Activated naive CD4-positive, alpha-beta T cell treated with anti-CD3 and anti-CD28 coated beads, Interleukin-2, amount 10 ng/mL, durations not matched to agents 7 days and 5 days (primary cell): ENCODE measurements at regions of chr1 and their contacts with region 1.

Region 1: GRCh38 chr1:89358287-89358893 is 5.5 kb upstream of the GBP6 start:
- DNase-seq: peak; percentile 90
- H3K4me3 Mint-ChIP-seq: peak overlapping the region; percentile 2
- H3K27ac Mint-ChIP-seq: peak overlapping the region; percentile 58
- H3K4me1 Mint-ChIP-seq: peaks cover 53% of the 10 kb centered on the region
- H3K27me3 Mint-ChIP-seq: no peaks in the 10 kb centered on the region

Region 2: DNA sequence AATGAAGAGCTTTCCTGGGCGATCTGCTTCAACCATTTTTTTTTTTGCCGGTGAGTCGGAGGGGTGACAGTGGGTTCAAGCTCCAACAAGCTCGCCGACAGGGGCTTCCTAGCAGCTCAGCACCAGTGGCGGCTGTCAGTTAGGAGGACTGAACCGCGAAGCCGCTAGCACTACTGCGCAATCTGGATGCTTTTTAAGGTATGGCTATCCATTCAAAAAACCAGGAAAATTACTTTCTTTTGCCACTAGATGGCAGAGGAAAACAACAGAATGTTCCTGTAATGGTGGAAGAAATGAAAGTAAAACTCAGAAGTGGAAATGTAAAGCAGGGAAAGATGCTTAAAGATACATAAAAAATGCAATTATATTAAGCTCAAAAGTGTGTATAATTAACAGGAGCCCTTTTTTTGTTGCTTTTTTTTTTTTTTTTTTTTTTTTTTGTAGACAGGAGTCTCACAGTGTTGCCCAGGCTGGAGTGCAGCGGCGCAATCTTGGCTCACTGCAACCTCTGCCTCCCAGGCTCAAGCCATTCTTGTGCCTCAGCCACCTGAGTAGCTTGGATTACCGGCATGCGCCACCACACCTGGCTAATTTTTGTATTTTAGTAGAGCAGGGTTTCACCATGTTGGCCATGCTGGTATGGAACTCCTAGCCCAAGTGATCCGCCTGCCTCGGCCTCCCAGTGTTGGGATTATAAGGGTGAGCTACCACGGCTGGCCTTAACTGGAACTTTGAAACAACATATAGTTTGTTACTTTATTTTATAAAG is 374.4 kb before region 1 on chr1:
- CTCF ChIA-PET with region 1: interaction called, 19 read pairs
- DNase-seq: peak; percentile 49
- H3K4me3 Mint-ChIP-seq: peak overlapping the region; percentile 15
- H3K27ac Mint-ChIP-seq: peak overlapping the region; percentile 44
- H3K4me1 Mint-ChIP-seq: peaks cover 75% of the 10 kb centered on the region
- H3K27me3 Mint-ChIP-seq: no peaks in the 10 kb centered on the region

Region 3: DNA sequence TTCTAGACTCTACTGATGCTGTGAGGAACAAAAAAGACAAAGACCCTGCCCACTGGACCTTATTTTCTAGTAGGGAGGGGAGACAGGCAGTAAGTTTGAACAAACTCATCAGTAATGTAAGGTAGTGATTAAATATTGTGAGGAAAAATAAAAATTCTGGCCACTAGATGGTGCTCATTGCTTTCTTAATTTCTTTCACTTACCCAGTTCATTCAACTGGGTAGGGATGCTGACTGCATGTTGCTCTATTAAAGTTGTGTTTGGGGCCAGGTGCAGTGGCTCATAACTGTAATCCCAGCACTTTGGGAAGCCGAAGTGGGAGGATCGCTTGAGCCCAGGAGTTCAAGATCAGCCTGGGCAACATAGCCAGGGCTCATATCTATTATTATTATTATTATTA is 359.7 kb before region 1 on chr1:
- CTCF ChIA-PET with region 1: interaction called, 20 read pairs
- DNase-seq: peak; percentile 35
- H3K4me3 Mint-ChIP-seq: no peak overlapping the region
- H3K27ac Mint-ChIP-seq: no peak overlapping the region
- H3K4me1 Mint-ChIP-seq: peaks cover 36% of the 10 kb centered on the region
- H3K27me3 Mint-ChIP-seq: no peaks in the 10 kb centered on the region

Region 4: GRCh38 chr1:89085781-89086180 is 272.6 kb before region 1 on chr1:
- CTCF ChIA-PET with region 1: interaction called, 16 read pairs
- DNase-seq: peak; percentile 59
- H3K4me3 Mint-ChIP-seq: no peak overlapping the region
- H3K27ac Mint-ChIP-seq: no peak overlapping the region
- H3K4me1 Mint-ChIP-seq: peaks cover 2% of the 10 kb centered on the region
- H3K27me3 Mint-ChIP-seq: no peaks in the 10 kb centered on the region

Region 5: DNA sequence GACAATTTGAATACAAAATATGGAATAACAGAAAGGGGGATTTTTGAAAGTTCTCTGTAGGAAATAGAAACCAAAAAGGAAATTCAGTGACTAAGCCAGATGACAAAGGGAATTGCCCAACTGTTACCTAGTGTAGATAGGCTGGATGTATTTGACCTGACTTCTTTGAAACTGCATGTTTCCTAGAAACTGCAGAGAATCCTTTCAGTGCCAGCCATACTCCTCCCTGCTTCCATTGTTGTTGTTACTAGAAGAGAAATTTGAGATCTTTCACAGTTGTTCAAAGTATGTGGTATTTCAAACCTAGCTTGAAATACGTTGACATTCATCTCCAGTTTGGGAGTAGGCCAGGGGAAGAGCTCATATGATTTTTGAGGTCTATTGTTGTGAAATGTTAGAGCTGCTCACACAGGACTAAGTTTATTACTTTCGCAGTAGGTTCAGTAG is 84.0 kb before region 1 on chr1:
- CTCF ChIA-PET with region 1: interaction called, 122 read pairs
- DNase-seq: peak; percentile 31
- H3K4me3 Mint-ChIP-seq: peak overlapping the region; percentile 76
- H3K27ac Mint-ChIP-seq: peak overlapping the region; percentile 98
- H3K4me1 Mint-ChIP-seq: peaks cover 69% of the 10 kb centered on the region
- H3K27me3 Mint-ChIP-seq: no peaks in the 10 kb centered on the region

Region 6: GRCh38 chr1:89286549-89287180 is 71.7 kb before region 1 on chr1:
- CTCF ChIA-PET with region 1: interaction called, 14 read pairs
- DNase-seq: peak; percentile 41
- H3K4me3 Mint-ChIP-seq: peak overlapping the region; percentile 28
- H3K27ac Mint-ChIP-seq: peak overlapping the region; percentile 96
- H3K4me1 Mint-ChIP-seq: peaks cover 82% of the 10 kb centered on the region
- H3K27me3 Mint-ChIP-seq: no peaks in the 10 kb centered on the region

Region 7: GRCh38 chr1:89454845-89455521 is 96.6 kb after region 1 on chr1:
- CTCF ChIA-PET with region 1: interaction called, 13 read pairs
- DNase-seq: peak; percentile 77
- H3K4me3 Mint-ChIP-seq: no peak overlapping the region
- H3K27ac Mint-ChIP-seq: no peak overlapping the region
- H3K4me1 Mint-ChIP-seq: peaks cover 15% of the 10 kb centered on the region
- H3K27me3 Mint-ChIP-seq: peaks cover 33% of the 10 kb centered on the region